ENCODE measurements at regions of chr11 and their contacts with region 1.

Region 1: GRCh38 chr11:72793425-72794367 is at the start of gene STARD10:
- DNase-seq: peak; percentile 95 to 99 (median 97)

Region 2: DNA sequence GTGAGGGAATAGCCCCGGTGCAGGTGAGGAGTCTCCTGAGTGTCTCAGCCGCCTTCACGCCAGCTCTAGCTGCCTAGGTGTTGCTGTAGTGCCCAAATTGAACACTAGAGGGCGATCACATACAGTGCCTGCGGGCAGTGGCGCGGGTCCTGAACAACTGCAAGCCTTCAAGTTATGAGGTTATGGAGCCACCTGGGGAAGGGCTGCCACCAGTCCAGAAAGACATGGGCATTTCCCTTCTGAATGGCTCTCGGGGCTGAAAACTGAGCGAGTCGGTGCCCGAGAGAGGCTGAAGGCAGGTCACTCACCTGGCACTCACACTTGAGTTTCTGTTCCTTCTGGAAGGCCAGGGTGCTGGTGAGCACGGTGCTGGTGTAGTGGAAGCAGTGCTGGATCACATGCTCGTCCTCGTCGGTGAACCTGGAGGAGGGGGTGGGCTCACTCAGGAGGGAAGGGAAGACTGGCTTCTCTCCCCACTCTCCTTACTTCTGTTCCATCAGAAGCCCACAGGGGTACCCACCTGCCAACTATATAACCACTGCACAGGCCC is 207.9 kb before region 1 on chr11:
- intact Hi-C with region 1: loop called (anchors 10 kb)
- DNase-seq: peak in 8 of 10 donors; percentile 37 to 93 (median 66)

Region 3: GRCh38 chr11:72724851-72725730 is 68.6 kb before region 1 on chr11:
- intact Hi-C with region 1: loop called (anchors 1 kb)
- DNase-seq: peak in 8 of 10 donors; percentile 42 to 96 (median 78)

Region 4: GRCh38 chr11:72745511-72746216 is 48.0 kb before region 1 on chr11:
- intact Hi-C with region 1: loop called (anchors 5 kb)
- DNase-seq: peak in 1 of 10 donors; percentile 78

Region 5: DNA sequence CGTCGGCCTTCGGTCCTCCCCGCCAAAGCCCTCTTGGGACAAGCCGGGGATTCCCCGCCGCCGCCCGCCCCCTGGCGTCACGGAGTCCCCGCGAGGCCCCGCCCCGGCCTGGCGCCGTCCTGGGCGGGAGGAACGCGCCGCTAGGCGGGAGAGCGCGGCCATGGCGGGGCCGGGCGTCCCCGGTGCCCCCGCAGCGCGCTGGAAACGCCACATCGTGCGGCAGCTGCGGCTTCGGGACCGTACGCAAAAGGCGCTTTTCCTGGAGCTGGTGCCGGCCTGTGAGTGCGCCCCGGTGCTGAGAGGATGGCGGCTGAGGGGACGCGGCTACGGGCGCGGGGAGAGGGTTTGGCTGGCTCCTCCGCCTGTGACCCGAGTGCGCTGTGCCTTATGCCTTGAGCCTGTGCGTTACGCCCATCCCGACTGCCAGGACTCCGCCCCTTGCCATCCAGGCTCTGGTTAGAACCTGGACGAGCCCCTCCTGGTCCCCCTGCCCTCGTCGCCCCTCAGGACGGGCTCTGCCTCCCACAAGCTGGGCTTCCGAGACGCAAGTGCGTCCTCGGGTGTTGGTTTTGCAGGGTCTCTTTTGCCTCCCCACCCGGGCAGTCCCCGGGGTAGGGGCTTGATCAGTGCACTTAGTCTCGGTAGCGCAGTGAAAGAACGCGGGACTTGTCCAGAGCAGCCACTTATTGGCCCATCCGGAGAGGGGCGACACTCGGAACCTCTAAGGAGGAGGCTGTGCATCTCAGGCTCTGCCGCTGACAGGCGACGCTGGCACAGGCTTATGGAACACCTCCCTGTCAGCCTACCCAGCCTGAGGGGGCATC is 20.8 kb after region 1 on chr11 and contains the start of gene ATG16L2:
- intact Hi-C with region 1: loop called (anchors 1 kb)
- DNase-seq: peak; percentile 77 to 98 (median 86)

Region 6: DNA sequence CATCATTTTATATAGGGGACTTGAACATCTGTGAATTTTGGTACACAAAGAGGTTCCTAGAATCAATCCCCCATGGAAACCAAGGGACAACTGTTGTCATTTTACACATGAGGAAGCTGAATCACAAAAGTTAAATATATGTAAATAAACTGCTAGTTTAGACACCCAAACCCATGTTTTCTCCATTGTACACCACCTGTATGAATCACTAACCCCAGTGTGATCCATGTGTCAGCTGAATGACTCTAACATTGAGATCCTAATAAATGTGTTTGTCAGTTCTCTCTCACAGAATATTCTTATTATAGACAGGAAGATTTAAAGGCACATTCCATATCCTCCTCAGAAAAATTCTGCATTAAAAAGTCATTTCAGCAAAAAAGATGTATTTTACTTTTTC is 103.8 kb after region 1 on chr11:
- intact Hi-C with region 1: no loop called
- DNase-seq: no peak

Measured in posterior cingulate gyrus (tissue), 11 donors.